ENCODE measurements at regions of chr17 and their contacts with region 1.

Region 1: GRCh38 chr17:7856883-7857723 is at the start of gene NAA38:
- DNase-seq: peak; percentile 100
- ATAC-seq: peak; percentile 91
- H3K4me3 ChIP-seq: peak within 1 kb of the TSS; percentile 96
- H3K27ac ChIP-seq: peak within 1 kb of the TSS; percentile 96
- H3K4me1 ChIP-seq: peaks cover 18% of the 10 kb centered on the region
- H3K27me3 ChIP-seq: no peaks in the 10 kb centered on the region
- CTCF ChIP-seq: peak in 2 of 3 experiments; percentile 48 to 69; a peak in 5 of 6 replicates
- EP300 ChIP-seq: no peak; a peak in 1 of 4 replicates
- POLR2A ChIP-seq: peak; percentile 76
- RAD21 ChIP-seq: no peak
- polyA plus RNA-seq, gene NAA38: 206 to 231 TPM

Region 2: GRCh38 chr17:6995431-6996255 is 861.5 kb before region 1 on chr17 and contains the start of gene ALOX12:
- CTCF ChIA-PET with region 1: no interaction called
- POLR2A ChIA-PET with region 1: no interaction called
- RAD21 ChIA-PET with region 1: no interaction called
- SMC1A ChIA-PET with region 1: no interaction called
- in situ Hi-C with region 1: no loop called
- intact Hi-C with region 1: no loop called
- DNase-seq: no peak
- ATAC-seq: no peak
- H3K4me3 ChIP-seq: no peak within 1 kb of the TSS
- H3K27ac ChIP-seq: no peak within 1 kb of the TSS
- H3K4me1 ChIP-seq: no peaks in the 10 kb centered on the region
- H3K27me3 ChIP-seq: no peaks in the 10 kb centered on the region
- CTCF ChIP-seq: no peak
- EP300 ChIP-seq: no peak
- POLR2A ChIP-seq: no peak
- RAD21 ChIP-seq: no peak
- polyA plus RNA-seq, gene ALOX12: 0.23 to 0.51 TPM

Region 3: DNA sequence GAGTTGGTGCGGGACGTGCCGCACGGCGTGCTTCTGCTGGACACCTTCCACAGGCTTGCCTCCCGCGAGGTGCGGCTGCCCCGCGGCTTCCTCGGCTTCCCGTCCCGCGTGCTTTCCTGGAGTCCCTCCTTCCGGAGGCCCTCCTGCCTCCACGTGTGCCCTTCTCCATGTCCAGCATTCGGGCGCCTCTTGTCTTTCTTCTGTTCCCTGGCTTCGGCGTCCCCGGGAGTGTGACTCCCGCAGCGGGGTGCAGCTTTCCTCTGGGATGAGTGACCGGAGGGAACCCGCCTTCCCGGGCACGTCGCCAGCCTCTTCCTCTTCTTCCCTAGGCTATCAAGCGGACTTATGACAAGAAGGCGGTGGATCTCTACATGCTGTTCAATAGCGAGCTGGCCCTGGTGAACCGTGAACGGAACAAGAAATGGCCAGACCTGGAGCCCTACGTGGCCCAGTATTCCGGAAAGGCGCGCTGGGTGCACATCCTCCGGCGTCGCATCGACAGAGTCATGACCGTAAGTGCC is 116.6 kb before region 1 on chr17:
- CTCF ChIA-PET with region 1: interaction called, 22 read pairs
- POLR2A ChIA-PET with region 1: no interaction called
- RAD21 ChIA-PET with region 1: interaction called, 7 read pairs
- SMC1A ChIA-PET with region 1: interaction called, 3 read pairs
- in situ Hi-C with region 1: no loop called
- intact Hi-C with region 1: loop called (anchors 2 kb)
- DNase-seq: no peak
- ATAC-seq: no peak
- H3K4me3 ChIP-seq: no peak overlapping the region
- H3K27ac ChIP-seq: no peak overlapping the region
- H3K4me1 ChIP-seq: no peaks in the 10 kb centered on the region
- H3K27me3 ChIP-seq: no peaks in the 10 kb centered on the region; a peak in 2 of 4 replicates
- CTCF ChIP-seq: no peak
- EP300 ChIP-seq: no peak
- POLR2A ChIP-seq: no peak
- RAD21 ChIP-seq: no peak

Region 4: DNA sequence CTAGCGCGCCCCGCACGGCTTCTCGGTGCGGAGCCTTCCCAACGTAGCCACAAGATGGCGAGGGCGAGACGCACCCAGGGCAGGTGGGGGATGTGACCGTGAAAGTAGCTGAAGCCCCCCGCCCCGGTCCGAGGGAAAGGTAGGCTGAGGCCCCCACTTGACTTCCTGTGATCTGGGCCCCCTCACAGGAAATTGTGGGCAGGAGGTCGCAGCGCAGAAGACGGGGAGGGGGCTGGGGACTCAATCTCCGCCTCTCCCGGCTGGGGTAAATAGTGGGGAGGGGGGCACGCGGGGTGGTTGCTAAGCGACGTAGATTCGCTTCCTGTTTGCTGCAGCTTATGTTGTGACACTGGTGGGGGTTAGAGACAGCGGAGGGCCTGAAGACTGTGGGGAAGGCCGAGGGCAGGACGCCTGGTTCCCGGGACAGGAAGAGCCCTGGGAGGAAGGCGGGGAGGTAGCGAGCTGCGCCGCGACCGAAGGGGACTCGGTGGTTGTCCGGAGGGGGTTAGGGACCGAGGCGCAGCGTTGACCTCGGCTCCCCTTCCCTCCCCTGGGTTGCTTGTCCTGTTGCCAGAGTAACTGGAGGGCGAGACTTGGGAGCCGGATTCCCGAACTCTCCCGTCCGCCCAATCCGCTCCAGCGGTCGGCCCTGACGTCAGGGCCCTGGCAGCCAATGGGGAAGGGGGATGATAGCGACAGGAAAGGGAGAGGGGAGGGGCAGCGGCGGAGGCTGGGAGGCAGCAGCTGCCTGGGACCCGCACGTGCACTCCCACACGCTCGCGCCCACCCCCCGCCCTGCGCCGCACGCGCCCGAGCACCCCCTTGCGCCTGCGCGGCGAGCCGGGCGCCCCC is 21.9 kb before region 1 on chr17:
- CTCF ChIA-PET with region 1: interaction called, 47 read pairs
- POLR2A ChIA-PET with region 1: interaction called, 14 read pairs
- RAD21 ChIA-PET with region 1: interaction called, 44 read pairs
- SMC1A ChIA-PET with region 1: interaction called, 14 read pairs
- in situ Hi-C with region 1: no loop called
- intact Hi-C with region 1: no loop called
- DNase-seq: peak; percentile 90
- ATAC-seq: peak; percentile 60
- H3K4me3 ChIP-seq: peak overlapping the region; percentile 100
- H3K27ac ChIP-seq: peak overlapping the region; percentile 76
- H3K4me1 ChIP-seq: peaks cover 21% of the 10 kb centered on the region
- H3K27me3 ChIP-seq: peaks cover 0 to 1% of the 10 kb centered on the region in 2 experiments; a peak in 1 of 4 replicates
- CTCF ChIP-seq: peak; percentile 82 to 87 (median 85)
- EP300 ChIP-seq: peak in 1 of 2 experiments; percentile 35; a peak in 1 of 4 replicates
- POLR2A ChIP-seq: no peak
- RAD21 ChIP-seq: peak; percentile 78

Region 5: DNA sequence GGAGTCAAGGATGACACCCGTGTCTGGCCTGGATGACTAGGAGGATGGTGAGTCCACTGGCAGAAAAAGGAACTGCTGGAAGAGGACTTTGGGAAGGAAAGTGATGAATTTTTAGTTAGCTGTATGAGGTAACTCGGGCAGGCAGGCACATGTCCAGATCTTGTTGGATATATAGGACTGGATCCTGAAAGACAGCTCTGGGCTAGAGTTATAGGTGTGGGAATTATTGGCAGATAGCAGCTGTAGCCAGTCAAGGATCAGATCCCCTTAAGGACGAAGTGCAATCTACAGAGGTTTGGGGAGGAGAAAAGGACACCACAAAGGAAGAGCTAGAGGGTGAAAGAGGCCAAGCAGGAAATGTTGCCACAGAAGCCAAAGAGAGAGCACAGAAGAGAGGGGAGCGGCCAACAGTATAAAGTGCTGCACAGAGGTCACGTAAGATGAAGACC is 10.8 kb after region 1 on chr17:
- CTCF ChIA-PET with region 1: interaction called, 19 read pairs
- POLR2A ChIA-PET with region 1: no interaction called
- RAD21 ChIA-PET with region 1: interaction called, 6 read pairs
- SMC1A ChIA-PET with region 1: interaction called, 9 read pairs
- in situ Hi-C with region 1: no loop called
- intact Hi-C with region 1: no loop called
- DNase-seq: no peak
- ATAC-seq: no peak
- H3K4me3 ChIP-seq: no peak overlapping the region
- H3K27ac ChIP-seq: no peak overlapping the region
- H3K4me1 ChIP-seq: no peaks in the 10 kb centered on the region
- H3K27me3 ChIP-seq: no peaks in the 10 kb centered on the region
- CTCF ChIP-seq: no peak
- EP300 ChIP-seq: no peak
- POLR2A ChIP-seq: no peak
- RAD21 ChIP-seq: no peak

Region 6: DNA sequence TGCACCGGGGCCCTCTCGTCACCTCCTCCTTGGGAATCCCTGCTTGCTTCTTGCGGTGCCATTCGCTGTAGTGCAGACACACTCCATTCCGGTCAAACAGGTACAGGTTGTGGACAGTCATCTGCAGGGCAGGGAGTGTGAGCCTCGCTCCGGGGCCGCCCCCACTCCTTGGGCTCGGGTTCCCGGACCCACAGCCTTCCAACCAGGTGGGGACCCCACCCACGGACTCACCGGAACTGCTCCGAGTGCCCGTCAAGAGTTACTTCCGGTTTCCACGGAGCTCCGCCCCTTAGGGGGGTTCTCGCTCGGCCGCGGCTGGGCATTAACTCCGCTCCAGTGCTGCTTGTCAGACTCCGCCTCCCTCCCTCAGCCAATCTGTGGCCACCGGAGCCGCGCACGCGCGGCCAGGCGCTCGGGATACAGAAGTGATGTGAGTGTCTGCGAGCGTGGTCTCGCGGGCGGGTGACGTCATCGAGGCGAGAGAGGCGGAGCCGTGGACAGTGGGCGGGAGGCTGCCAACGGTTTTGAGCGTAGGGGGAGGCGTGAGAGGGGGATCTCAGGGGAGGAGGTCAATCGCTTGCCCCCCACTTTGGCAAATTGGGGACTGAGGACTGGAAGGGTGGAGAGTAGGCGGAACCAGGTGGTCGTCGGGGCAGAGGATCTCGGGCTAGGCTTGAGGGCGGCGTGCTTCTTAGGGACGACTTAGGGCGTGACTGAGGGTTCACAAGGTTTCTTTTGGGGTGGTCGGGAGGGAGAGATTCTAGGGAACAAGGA is 74.8 kb after region 1 on chr17 and contains the starts of genes CNTROB and TRAPPC1:
- CTCF ChIA-PET with region 1: interaction called, 22 read pairs
- POLR2A ChIA-PET with region 1: interaction called, 4 read pairs
- RAD21 ChIA-PET with region 1: interaction called, 10 read pairs
- SMC1A ChIA-PET with region 1: interaction called, 25 read pairs
- in situ Hi-C with region 1: no loop called
- intact Hi-C with region 1: no loop called
- DNase-seq: peak; percentile 98
- ATAC-seq: peak; percentile 92
- H3K4me3 ChIP-seq: peak within 1 kb of the TSS; percentile 100
- H3K27ac ChIP-seq: peak within 1 kb of the TSS; percentile 96
- H3K4me1 ChIP-seq: peaks cover 8% of the 10 kb centered on the region
- H3K27me3 ChIP-seq: no peaks in the 10 kb centered on the region
- CTCF ChIP-seq: no peak
- EP300 ChIP-seq: peak in 1 of 2 experiments; percentile 27; a peak in 1 of 4 replicates
- POLR2A ChIP-seq: peak; percentile 92
- RAD21 ChIP-seq: no peak
- polyA plus RNA-seq, gene CNTROB: 2.0 to 4.2 TPM
- polyA plus RNA-seq, gene TRAPPC1: 95.5 to 113 TPM